Activated naive CD4-positive, alpha-beta T cell treated with anti-CD3 and anti-CD28 coated beads, Interleukin-2, amount 10 ng/mL, durations not matched to agents 7 days and 5 days (primary cell): ENCODE measurements at regions of chr1 and their contacts with region 1.

Region 1: GRCh38 chr1:37449936-37450335 is 24.4 kb upstream of the ZC3H12A start:
- DNase-seq: peak; percentile 60
- H3K4me3 Mint-ChIP-seq: no peak overlapping the region
- H3K27ac Mint-ChIP-seq: peak overlapping the region; percentile 69
- H3K4me1 Mint-ChIP-seq: peaks cover 15% of the 10 kb centered on the region
- H3K27me3 Mint-ChIP-seq: peaks cover 32% of the 10 kb centered on the region

Region 2: GRCh38 chr1:37474046-37474759 is 24.3 kb after region 1 on chr1 and contains the start of gene ZC3H12A:
- CTCF ChIA-PET with region 1: interaction called, 38 read pairs
- DNase-seq: peak; percentile 92
- H3K4me3 Mint-ChIP-seq: peak within 1 kb of the TSS; percentile 97
- H3K27ac Mint-ChIP-seq: peak within 1 kb of the TSS; percentile 88
- H3K4me1 Mint-ChIP-seq: peaks cover 58% of the 10 kb centered on the region
- H3K27me3 Mint-ChIP-seq: no peaks in the 10 kb centered on the region

Region 3: GRCh38 chr1:37631036-37631435 is 181.1 kb after region 1 on chr1:
- CTCF ChIA-PET with region 1: no interaction called
- DNase-seq: no peak
- H3K4me3 Mint-ChIP-seq: no peak overlapping the region
- H3K27ac Mint-ChIP-seq: no peak overlapping the region
- H3K4me1 Mint-ChIP-seq: peaks cover 2% of the 10 kb centered on the region
- H3K27me3 Mint-ChIP-seq: peaks cover 46% of the 10 kb centered on the region